K562 (cell line): ENCODE measurements at regions of chr12 and their contacts with region 1.

Region 1: DNA sequence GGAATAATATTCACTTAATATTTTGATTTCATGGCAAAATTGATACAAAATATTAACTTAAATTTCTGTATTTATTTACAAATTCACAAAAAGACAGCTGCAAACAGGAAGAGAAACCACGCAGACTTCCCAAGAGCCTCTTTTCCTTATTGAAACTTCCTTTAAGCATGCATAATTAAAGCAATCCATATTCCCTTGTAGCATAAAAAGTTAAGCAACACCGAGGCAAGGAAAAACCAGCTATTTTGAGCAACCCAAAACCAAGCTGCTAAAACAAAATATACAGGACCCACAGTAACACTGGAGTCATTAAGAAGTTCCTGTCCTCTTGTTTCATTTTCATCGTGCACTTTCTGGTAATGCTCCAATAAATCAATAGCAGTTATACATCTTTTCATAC is 58.0 kb downstream of the EEA1 start:
- DNase-seq: no peak
- ATAC-seq: no peak
- H3K4me3 ChIP-seq: no peak overlapping the region
- H3K27ac ChIP-seq: no peak overlapping the region
- H3K4me1 ChIP-seq: peaks cover 0 to 3% of the 10 kb centered on the region in 2 experiments; a peak in 1 of 5 replicates
- H3K27me3 ChIP-seq: no peaks in the 10 kb centered on the region
- CTCF ChIP-seq: no peak
- EP300 ChIP-seq: no peak
- POLR2A ChIP-seq: no peak
- RAD21 ChIP-seq: no peak

Region 2: DNA sequence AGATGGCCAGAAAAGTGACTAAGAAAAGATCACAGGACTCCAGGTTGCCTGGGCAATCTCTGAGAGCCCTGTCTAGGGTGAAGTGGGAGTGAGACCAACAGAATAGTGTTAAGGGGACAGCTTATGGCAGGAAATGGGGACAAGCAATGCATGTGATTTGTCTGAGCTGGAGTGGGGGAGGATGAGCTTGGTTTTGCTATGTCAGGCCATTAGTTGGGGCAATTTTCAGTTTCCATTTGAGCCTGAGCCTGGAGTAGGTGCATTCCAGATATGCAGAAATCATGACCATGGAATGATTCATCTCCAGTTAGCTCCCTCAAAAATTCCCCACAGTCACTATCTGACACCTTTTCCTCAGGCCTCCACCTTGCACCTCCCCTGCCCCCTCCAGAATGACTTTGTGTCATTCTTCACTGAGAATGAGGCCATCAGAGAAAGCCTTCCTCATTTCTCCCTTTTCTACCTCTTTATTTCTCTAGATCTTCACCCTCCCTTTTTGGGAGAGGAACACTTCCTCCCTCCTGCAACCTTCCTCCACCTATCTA is 319.2 kb before region 1 on chr12:
- CTCF ChIA-PET with region 1: no interaction called
- POLR2A ChIA-PET with region 1: no interaction called
- in situ Hi-C with region 1: no loop called
- intact Hi-C with region 1: no loop called
- DNase-seq: peak in 1 of 4 experiments; percentile 42
- ATAC-seq: no peak; the same call in 1 of the 3 replicates
- H3K4me3 ChIP-seq: no peak overlapping the region
- H3K27ac ChIP-seq: no peak overlapping the region
- H3K4me1 ChIP-seq: peaks cover 3 to 18% of the 10 kb centered on the region in 2 experiments; a peak in 4 of 5 replicates
- H3K27me3 ChIP-seq: no peaks in the 10 kb centered on the region
- CTCF ChIP-seq: no peak
- EP300 ChIP-seq: 0 out of 2 replicates have a peak, but pooled peaks have one; percentile 15
- POLR2A ChIP-seq: no peak
- RAD21 ChIP-seq: no peak

Region 3: DNA sequence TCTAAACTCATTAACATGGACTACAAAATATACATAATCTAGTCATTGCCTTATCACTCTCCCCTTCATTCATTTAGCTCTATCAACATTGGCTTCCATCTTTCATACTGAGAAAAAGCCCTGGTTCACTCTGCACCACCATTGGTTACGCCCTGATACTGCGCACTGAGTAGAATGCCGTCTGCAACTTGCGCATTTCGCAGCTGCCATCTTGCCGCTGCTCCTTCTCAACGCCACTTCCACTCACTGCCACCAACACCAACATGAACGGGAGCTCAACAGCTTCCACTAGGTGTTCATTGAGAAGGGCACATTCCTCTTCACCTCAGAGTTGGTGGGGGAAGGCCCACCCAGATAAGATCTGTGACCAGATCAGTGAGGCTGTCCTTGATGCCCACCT is 13.3 kb before region 1 on chr12:
- CTCF ChIA-PET with region 1: no interaction called
- POLR2A ChIA-PET with region 1: interaction called, 10 read pairs
- in situ Hi-C with region 1: no loop called
- intact Hi-C with region 1: no loop called
- DNase-seq: no peak
- ATAC-seq: no peak
- H3K4me3 ChIP-seq: no peak overlapping the region
- H3K27ac ChIP-seq: no peak overlapping the region
- H3K4me1 ChIP-seq: peaks cover 0 to 10% of the 10 kb centered on the region in 2 experiments; a peak in 3 of 5 replicates
- H3K27me3 ChIP-seq: no peaks in the 10 kb centered on the region
- CTCF ChIP-seq: no peak
- EP300 ChIP-seq: no peak
- POLR2A ChIP-seq: no peak
- RAD21 ChIP-seq: no peak

Region 4: DNA sequence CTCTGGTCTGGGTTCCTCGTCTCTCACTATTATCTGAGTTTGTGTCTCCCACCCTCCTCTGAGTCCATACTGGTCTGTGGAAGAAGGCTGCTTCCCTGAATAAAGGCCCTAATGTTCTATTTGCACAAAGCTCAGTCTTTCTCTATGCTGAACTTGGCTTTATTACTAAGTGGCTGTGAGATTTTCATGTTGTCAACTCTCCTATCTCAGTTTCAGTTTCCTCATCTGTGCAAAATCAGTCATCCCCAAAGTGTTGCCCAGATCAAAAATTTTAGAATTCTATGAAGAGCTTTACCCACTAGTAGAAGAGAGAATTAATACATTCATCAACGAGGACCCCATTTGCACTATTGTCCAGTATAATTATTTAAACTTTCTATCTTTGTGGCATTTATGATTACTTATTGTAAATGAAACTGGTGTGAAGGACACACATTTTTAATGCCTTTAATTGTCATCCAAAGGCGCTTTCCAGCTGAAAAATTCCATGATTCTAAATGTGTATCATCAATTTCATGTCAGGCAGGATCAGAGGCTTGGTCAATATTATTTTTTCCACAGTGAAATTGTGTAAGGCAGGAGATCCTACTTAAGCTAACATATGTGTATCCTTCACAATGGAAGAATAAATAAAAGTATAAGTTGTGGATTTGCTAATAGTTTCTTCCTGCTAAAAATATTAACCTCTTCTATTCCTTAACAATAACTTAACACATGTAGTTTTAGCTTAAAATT is 137.1 kb after region 1 on chr12:
- CTCF ChIA-PET with region 1: no interaction called
- POLR2A ChIA-PET with region 1: no interaction called
- in situ Hi-C with region 1: no loop called
- intact Hi-C with region 1: no loop called
- DNase-seq: no peak
- ATAC-seq: peak; percentile 22; the same call in 1 of the 3 replicates
- H3K4me3 ChIP-seq: no peak overlapping the region
- H3K27ac ChIP-seq: no peak overlapping the region
- H3K4me1 ChIP-seq: no peaks in the 10 kb centered on the region; a peak in 2 of 5 replicates
- H3K27me3 ChIP-seq: no peaks in the 10 kb centered on the region
- CTCF ChIP-seq: no peak
- EP300 ChIP-seq: no peak
- POLR2A ChIP-seq: no peak
- RAD21 ChIP-seq: no peak